Head of caudate nucleus (tissue), 42 donors: ENCODE measurements at regions of chrX and their contacts with region 1.

Region 1: GRCh38 chrX:140141444-140142029 is 176.2 kb upstream of the CXorf66 start:
- DNase-seq: peak in 38 of 42 donors; percentile 7 to 78 (median 52)

Region 2: DNA sequence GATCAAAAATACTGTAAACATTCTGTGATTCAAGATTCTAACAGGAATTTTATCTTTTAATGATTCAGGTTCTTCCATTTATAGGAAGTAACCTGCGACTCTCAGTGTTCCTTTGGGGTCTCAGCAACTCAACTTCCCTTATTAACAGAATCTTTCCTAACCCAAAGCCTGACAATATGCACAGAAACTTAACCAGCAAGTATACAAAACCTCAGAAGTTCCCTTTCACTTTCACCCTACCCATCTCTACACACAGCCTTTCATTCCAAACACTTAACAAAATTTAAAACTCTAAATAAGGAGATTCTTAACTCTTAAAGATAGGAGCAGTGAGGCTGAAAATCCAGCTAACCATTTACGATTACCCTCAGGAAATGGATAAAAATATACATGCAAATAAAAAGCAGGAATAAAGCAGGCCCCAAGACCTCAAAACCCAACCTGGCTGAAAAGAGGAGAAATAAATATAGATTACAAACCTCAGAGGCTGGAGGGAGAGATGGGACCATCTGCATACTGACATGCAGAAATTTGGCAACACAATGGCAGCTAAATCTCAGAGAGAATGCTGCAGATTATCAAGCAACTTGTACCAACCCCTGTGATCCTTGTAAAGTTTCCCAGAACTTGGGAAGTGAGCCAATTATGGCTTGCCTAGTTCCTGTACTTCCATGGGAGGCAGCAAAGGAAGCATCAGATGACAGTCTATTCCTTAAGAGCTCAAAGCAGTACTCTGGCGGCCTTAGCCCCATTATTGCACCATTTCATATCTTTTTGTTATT is 309.7 kb before region 1 on chrX:
- intact Hi-C with region 1: no loop called
- DNase-seq: no peak

Region 3: GRCh38 chrX:140071037-140071436 is 70.5 kb before region 1 on chrX:
- intact Hi-C with region 1: loop called (anchors 5 kb)
- DNase-seq: no peak